Activated CD8-positive, alpha-beta T cell treated with anti-CD3 and anti-CD28 coated beads for 36 hours (primary cell): ENCODE measurements at regions of chr1 and their contacts with region 1.

Region 1: DNA sequence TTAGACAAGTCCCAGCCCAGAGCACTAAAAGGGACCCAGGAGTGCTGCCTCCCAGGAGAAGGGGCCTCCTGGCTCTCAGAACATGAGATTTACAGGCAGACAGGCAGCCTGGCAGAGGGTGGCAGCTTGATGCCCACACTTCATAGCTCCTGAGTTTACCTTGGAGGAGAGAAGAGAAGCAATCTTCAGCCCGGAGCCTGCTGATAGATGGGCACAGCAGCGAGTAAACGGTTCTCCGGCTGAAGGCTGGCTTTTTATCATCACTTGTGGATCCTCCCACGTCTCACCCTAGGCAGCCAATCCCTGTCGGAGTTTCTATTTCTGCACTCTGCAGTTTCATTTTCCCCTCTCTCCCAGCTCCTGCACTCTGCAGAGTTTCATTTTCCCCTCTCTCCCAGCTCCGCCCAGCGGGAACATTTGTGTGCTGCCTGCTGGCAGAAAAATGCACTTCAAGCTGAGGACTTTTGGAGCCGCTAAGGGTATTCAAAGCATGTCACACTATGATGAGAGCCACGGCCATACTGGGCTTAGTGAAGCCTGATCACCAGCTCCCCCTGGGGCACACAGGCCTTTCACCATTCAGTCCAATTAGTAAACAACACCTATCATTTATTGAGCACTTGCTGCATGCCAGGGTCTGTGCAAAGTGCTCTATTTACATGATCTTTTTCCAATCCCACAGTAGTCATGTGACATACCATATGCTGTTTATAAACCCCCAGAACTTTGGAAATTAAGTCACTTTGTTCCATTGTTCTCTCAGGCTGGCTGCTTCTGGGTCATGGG is at the start of gene IFI6:
- DNase-seq: peak; percentile 88
- ATAC-seq: peak; percentile 91
- H3K4me3 Mint-ChIP-seq: peak within 1 kb of the TSS; percentile 80
- H3K27ac Mint-ChIP-seq: peak within 1 kb of the TSS; percentile 90
- H3K4me1 Mint-ChIP-seq: peaks cover 34% of the 10 kb centered on the region
- H3K27me3 Mint-ChIP-seq: no peaks in the 10 kb centered on the region
- CTCF ChIP-seq: peak; percentile 35
- total RNA-seq, gene IFI6: 31.6 to 32.1 TPM

Region 2: GRCh38 chr1:27568300-27569087 is 103.7 kb before region 1 on chr1:
- CTCF ChIA-PET with region 1: interaction called, 13 read pairs
- POLR2A ChIA-PET with region 1: no interaction called
- intact Hi-C with region 1: no loop called
- DNase-seq: peak; percentile 92
- ATAC-seq: peak; percentile 91
- H3K4me3 Mint-ChIP-seq: peak overlapping the region; percentile 44
- H3K27ac Mint-ChIP-seq: peak overlapping the region; percentile 32
- H3K4me1 Mint-ChIP-seq: peaks cover 25% of the 10 kb centered on the region
- H3K27me3 Mint-ChIP-seq: no peaks in the 10 kb centered on the region
- CTCF ChIP-seq: peak; percentile 73

Region 3: DNA sequence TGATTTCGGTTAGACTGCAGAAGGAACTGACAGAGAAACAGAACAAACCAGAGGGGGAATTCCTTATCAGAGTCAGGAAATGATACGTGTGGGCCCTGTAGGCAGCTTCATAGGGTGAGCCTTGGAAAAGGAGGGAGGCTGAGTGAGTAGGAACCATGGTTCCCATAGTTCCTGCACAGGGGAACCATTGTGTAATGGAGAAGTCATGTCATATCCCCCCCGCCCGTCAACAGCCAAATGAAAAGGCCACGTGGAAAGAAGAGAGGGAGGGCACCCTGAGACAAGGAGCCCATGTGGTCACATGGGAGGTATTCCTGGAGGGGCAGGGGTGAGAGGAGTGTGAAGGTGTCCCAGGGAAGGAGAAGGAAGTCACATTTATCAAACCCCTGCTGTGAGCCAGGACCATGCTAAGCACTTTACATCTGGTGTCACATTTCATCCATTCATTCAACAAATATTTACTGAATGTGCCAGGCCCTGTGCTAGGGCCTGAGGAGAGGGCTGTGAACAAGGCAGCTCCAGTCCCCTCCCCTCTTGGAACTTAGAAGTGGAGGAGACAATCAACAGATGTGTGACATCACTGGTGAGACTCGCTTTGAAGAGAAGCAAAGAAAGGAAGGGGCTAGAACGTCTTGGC is 21.5 kb before region 1 on chr1:
- CTCF ChIA-PET with region 1: interaction called, 16 read pairs
- POLR2A ChIA-PET with region 1: no interaction called
- intact Hi-C with region 1: no loop called
- DNase-seq: no peak
- ATAC-seq: peak; percentile 45
- H3K4me3 Mint-ChIP-seq: no peak overlapping the region
- H3K27ac Mint-ChIP-seq: peak overlapping the region; percentile 67
- H3K4me1 Mint-ChIP-seq: peaks cover 17% of the 10 kb centered on the region
- H3K27me3 Mint-ChIP-seq: no peaks in the 10 kb centered on the region
- CTCF ChIP-seq: no peak

Region 4: GRCh38 chr1:27725374-27726173 is 53.4 kb after region 1 on chr1 and contains the start of gene FAM76A:
- CTCF ChIA-PET with region 1: interaction called, 12 read pairs
- POLR2A ChIA-PET with region 1: interaction called, 5 read pairs
- intact Hi-C with region 1: no loop called
- DNase-seq: peak; percentile 100
- ATAC-seq: peak; percentile 98
- H3K4me3 Mint-ChIP-seq: peak within 1 kb of the TSS; percentile 80
- H3K27ac Mint-ChIP-seq: peak within 1 kb of the TSS; percentile 94
- H3K4me1 Mint-ChIP-seq: peaks cover 24% of the 10 kb centered on the region
- H3K27me3 Mint-ChIP-seq: no peaks in the 10 kb centered on the region
- CTCF ChIP-seq: peak; percentile 36
- total RNA-seq, gene FAM76A: 6.9 to 7.9 TPM

Region 5: DNA sequence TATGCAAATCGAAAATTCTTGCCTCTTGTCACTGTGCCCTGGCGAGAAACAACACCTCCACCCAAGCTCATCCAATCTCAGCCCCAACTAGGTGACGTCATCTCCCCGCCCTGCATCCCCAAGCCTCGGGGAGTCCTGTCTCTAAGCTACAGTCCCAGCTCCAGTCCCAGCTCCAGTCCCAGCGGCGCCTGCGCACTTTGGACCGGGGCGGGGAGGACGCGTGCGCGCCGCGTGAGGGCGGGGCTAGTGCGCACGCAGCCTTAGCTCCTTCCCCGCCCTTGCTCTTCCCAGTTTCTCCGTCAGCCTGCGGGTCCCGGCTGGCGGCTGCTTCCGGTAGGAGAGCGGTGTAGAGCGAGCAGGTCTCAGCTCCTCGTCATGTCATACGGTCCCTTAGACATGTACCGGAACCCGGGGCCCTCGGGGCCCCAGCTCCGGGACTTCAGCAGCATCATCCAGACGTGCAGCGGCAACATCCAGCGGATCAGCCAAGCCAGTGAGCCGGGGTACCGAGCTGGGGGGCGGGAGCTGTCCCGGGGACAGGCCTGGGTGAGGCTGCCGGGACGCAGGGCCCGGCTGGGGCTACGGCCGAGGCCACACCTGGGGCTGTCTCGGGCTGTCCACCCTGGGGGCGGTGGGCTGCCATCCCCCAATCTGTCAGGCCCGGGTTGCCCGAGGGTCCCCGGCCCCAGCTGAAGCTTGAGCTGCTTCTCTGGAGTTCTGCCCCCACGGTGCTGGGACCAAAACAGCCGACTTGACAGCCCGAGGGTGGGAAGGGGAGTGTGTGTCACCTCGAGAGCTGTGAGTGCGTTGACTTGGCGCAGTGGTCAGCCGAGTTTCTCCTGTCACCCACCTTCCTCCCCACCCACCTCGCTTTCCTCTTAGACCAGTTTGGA is 101.0 kb after region 1 on chr1 and contains the start of gene STX12:
- CTCF ChIA-PET with region 1: interaction called, 18 read pairs
- POLR2A ChIA-PET with region 1: no interaction called
- intact Hi-C with region 1: no loop called
- DNase-seq: peak; percentile 100
- ATAC-seq: peak; percentile 96
- H3K4me3 Mint-ChIP-seq: peak within 1 kb of the TSS; percentile 94
- H3K27ac Mint-ChIP-seq: peak within 1 kb of the TSS; percentile 98
- H3K4me1 Mint-ChIP-seq: peaks cover 32% of the 10 kb centered on the region
- H3K27me3 Mint-ChIP-seq: no peaks in the 10 kb centered on the region
- CTCF ChIP-seq: no peak
- total RNA-seq, gene STX12: 19.4 to 22.1 TPM

Region 6: DNA sequence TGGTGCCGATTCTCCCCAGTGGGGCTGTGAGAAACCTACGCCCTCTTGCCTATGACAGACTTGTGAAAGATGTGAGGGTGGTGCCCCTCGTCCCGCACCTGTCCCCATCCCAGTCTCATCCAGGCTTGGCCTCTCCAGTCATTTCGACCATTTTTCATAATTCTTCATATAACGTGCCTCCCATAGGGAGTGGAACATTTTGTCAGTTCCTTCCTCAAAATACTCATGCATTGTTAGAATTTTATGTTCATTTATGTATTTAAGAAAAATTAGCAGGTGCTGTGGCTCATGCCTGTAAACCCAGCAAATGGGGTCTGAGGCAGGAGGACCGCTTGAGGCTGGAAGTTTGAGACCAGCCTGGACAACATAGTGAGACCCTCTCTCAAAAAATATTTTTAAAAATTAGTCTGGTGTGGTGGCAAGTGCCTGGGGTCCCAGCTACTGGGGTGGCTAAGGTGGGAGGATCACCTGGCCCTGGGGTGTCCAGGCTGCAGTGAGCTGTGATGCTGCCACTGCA is 243.0 kb after region 1 on chr1:
- CTCF ChIA-PET with region 1: no interaction called
- POLR2A ChIA-PET with region 1: no interaction called
- intact Hi-C with region 1: no loop called
- DNase-seq: no peak
- ATAC-seq: no peak
- H3K4me3 Mint-ChIP-seq: peak overlapping the region; percentile 99
- H3K27ac Mint-ChIP-seq: peak overlapping the region; percentile 100
- H3K4me1 Mint-ChIP-seq: peaks cover 16% of the 10 kb centered on the region
- H3K27me3 Mint-ChIP-seq: no peaks in the 10 kb centered on the region
- CTCF ChIP-seq: no peak

Region 7: GRCh38 chr1:28064064-28064463 is 391.9 kb after region 1 on chr1:
- CTCF ChIA-PET with region 1: no interaction called
- POLR2A ChIA-PET with region 1: no interaction called
- intact Hi-C with region 1: no loop called
- DNase-seq: no peak
- ATAC-seq: no peak
- H3K4me3 Mint-ChIP-seq: no peak overlapping the region
- H3K27ac Mint-ChIP-seq: no peak overlapping the region
- H3K4me1 Mint-ChIP-seq: peaks cover 44% of the 10 kb centered on the region
- H3K27me3 Mint-ChIP-seq: no peaks in the 10 kb centered on the region
- CTCF ChIP-seq: no peak